CD4-positive, alpha-beta T cell (primary cell): ENCODE measurements at regions of chr1 and their contacts with region 1.

Region 1: GRCh38 chr1:169348383-169349036 is 19.1 kb downstream of the NME7 start:
- DNase-seq: peak in 4 of 14 experiments; percentile 38 to 79 (median 68)
- ATAC-seq: peak; percentile 46
- H3K4me3 ChIP-seq: no peak overlapping the region
- H3K4me3 Mint-ChIP-seq: no peak overlapping the region
- H3K27ac ChIP-seq: no peak overlapping the region
- H3K27ac Mint-ChIP-seq: no peak overlapping the region
- H3K4me1 ChIP-seq: no peaks in the 10 kb centered on the region
- H3K4me1 Mint-ChIP-seq: no peaks in the 10 kb centered on the region
- H3K27me3 ChIP-seq: no peaks in the 10 kb centered on the region
- H3K27me3 Mint-ChIP-seq: no peaks in the 10 kb centered on the region
- CTCF ChIP-seq: peak; percentile 92

Region 2: GRCh38 chr1:169106095-169106920 is 242.2 kb before region 1 on chr1 and contains the start of gene ATP1B1:
- CTCF ChIA-PET with region 1: interaction called, 3 read pairs
- POLR2A ChIA-PET with region 1: no interaction called
- intact Hi-C with region 1: loop called in 1 of 2 experiments (anchors 5 kb)
- DNase-seq: peak; percentile 56 to 88 (median 72)
- ATAC-seq: peak; percentile 89
- H3K4me3 ChIP-seq: peak within 1 kb of the TSS; percentile 74
- H3K4me3 Mint-ChIP-seq: peak within 1 kb of the TSS; percentile 94
- H3K27ac ChIP-seq: no peak within 1 kb of the TSS
- H3K27ac Mint-ChIP-seq: peak within 1 kb of the TSS; percentile 5
- H3K4me1 ChIP-seq: peaks cover 36% of the 10 kb centered on the region
- H3K4me1 Mint-ChIP-seq: peaks cover 43% of the 10 kb centered on the region
- H3K27me3 ChIP-seq: no peaks in the 10 kb centered on the region
- H3K27me3 Mint-ChIP-seq: peaks cover 4% of the 10 kb centered on the region
- CTCF ChIP-seq: no peak
- total RNA-seq, gene ATP1B1: 3.5 to 4.5 TPM